Endothelial cell of umbilical vein (primary cell): ENCODE measurements at regions of chr16 and their contacts with region 1.

Region 1: DNA sequence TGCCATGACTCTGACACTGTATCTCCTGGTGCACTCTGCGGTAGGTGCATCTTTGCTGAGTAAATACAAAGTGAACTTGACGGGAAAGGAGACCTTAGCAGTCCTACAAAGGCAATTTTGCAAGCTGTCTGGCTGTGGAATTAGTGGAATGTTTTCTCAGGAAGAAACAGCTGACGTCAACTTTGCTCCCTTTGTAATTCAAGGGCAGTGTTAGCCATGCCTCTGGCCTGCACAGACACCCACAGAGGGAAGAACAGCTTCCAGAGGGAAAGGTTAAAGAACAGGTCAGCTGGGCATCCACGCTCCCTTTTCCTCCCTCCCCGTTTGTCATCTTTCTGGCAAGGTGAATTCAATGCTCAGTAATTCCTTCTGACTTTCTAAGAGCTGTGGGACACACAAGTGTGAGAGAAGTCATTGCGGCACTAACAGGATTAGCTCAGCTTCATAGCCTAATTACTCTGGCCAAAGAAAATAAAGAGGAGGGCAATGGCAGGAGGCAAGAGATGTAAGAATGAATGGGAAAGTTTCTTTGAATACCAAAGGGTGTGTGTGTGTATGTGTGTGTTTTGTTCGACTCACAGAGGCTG is 476.9 kb upstream of the GOT2 start:
- DNase-seq: peak; percentile 97
- H3K4me3 ChIP-seq: peak overlapping the region in 1 of 3 experiments; percentile 35
- H3K27ac ChIP-seq: peak overlapping the region; percentile 92
- H3K4me1 ChIP-seq: peaks cover 33% of the 10 kb centered on the region
- H3K27me3 ChIP-seq: no peaks in the 10 kb centered on the region
- CTCF ChIP-seq: no peak
- POLR2A ChIP-seq: no peak

Region 2: GRCh38 chr16:59236804-59237463 is 25.9 kb after region 1 on chr16:
- CTCF ChIA-PET with region 1: no interaction called
- POLR2A ChIA-PET with region 1: no interaction called
- dilution Hi-C with region 1: no loop called
- intact Hi-C with region 1: no loop called
- DNase-seq: no peak
- H3K4me3 ChIP-seq: no peak overlapping the region
- H3K27ac ChIP-seq: no peak overlapping the region
- H3K4me1 ChIP-seq: no peaks in the 10 kb centered on the region
- H3K27me3 ChIP-seq: no peaks in the 10 kb centered on the region
- CTCF ChIP-seq: no peak
- POLR2A ChIP-seq: no peak

Region 3: DNA sequence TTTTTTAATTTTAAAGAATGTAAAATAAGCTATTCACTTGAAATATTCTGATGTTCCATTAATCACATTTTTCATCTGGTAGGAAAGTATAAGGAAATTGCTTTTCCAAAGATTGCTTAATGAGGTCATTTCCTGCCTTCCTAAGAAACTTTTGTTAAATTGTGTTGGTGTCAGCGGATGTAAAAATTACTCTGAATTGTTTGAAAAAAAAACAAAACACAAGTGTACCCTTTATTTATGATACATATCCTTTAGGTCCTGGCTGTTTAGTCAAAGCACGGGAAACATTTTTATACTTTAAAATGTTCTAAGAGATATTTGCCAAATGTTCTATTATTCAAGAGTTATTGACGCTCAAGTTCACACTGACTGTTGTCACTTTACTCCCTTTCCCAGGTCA is 880.5 kb after region 1 on chr16:
- CTCF ChIA-PET with region 1: no interaction called
- POLR2A ChIA-PET with region 1: no interaction called
- dilution Hi-C with region 1: no loop called
- intact Hi-C with region 1: loop called (anchors 5 kb)
- DNase-seq: peak; percentile 88
- H3K4me3 ChIP-seq: peak overlapping the region in 1 of 3 experiments; percentile 28
- H3K27ac ChIP-seq: peak overlapping the region; percentile 90
- H3K4me1 ChIP-seq: peaks cover 24% of the 10 kb centered on the region
- H3K27me3 ChIP-seq: no peaks in the 10 kb centered on the region
- CTCF ChIP-seq: no peak
- POLR2A ChIP-seq: no peak